ENCODE measurements at regions of chr13 and their contacts with region 1.

Region 1: GRCh38 chr13:21625366-21625765 is 21.4 kb upstream of the MICU2 start:
- DNase-seq: peak; percentile 59
- ATAC-seq: peak; percentile 94
- H3K4me3 ChIP-seq: no peak overlapping the region
- H3K27ac ChIP-seq: no peak overlapping the region
- H3K4me1 ChIP-seq: no peaks in the 10 kb centered on the region
- H3K27me3 ChIP-seq: peaks cover 21% of the 10 kb centered on the region
- CTCF ChIP-seq: peak; percentile 79

Region 2: GRCh38 chr13:21603531-21604448 is 21.6 kb before region 1 on chr13 and contains the start of gene MICU2:
- CTCF ChIA-PET with region 1: no interaction called
- POLR2A ChIA-PET with region 1: interaction called, 11 read pairs
- intact Hi-C with region 1: no loop called
- DNase-seq: peak; percentile 87
- ATAC-seq: peak; percentile 98
- H3K4me3 ChIP-seq: peak within 1 kb of the TSS; percentile 87
- H3K27ac ChIP-seq: peak within 1 kb of the TSS; percentile 74
- H3K4me1 ChIP-seq: peaks cover 5% of the 10 kb centered on the region; the same call in 1 of the 2 replicates
- H3K27me3 ChIP-seq: peaks cover 8% of the 10 kb centered on the region; the same call in 1 of the 2 replicates
- CTCF ChIP-seq: no peak
- total RNA-seq, gene MICU2: 53.3 and 69.9 TPM in 2 replicates

Region 3: DNA sequence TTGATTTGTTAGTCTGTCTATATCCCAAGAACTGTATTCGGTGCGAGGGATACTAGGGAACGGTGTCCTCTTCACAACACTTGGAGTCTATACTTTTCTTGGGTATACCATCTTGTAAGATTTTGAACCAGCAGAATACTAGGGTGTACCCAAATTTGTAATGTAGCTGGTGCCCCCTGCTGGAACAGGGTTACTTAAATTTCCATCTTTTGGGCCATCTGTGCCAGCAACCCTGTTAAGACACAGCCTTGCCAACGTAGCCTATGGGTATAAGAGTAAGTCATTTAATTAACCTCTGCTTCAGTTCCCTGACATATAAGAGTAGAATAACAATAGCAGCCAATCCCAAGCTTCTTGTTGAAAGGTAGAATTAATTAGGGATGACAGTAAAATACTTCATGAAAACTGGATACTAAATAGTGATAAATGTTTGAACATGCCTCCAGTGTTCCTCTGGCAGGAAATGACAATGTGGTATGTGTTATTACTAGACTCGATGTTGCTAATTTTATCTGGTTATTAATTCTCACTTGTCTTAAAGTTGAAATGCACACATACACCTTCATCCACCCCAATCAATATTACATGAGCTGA is 653.1 kb after region 1 on chr13:
- CTCF ChIA-PET with region 1: no interaction called
- POLR2A ChIA-PET with region 1: no interaction called
- intact Hi-C with region 1: loop called (anchors 2 kb)
- DNase-seq: peak; percentile 44
- ATAC-seq: no peak
- H3K4me3 ChIP-seq: no peak overlapping the region
- H3K27ac ChIP-seq: no peak overlapping the region
- H3K4me1 ChIP-seq: no peaks in the 10 kb centered on the region
- H3K27me3 ChIP-seq: 0 out of 2 replicates have a peak, but pooled peaks cover 4% of the 10 kb centered on the region
- CTCF ChIP-seq: peak; percentile 46

Region 4: DNA sequence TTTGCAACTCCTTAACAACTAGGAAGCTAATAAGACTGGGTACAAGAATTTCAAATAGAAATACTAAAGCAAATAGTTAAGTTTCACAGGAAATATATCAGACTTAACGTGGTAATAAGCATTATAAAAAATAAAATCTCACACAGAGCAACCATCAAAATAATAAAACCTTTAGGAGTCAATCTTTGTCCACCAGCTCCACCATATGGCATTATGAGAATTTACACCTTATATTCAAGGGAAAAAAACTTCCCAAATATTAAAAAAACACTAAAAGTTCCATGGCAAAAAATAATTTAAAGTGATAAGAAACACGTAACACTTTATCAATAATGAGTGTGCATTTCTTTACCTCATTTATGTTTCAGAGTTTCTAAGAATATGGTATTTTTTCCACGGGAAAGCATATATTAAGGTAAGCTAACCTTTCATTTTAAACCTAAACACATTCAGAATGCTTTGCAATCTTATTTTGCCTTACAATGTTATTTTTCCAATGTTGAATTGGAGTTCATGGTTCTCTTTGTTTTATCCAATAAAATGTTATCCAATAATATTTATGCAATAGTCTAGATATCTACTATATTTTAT is 1132.3 kb after region 1 on chr13:
- CTCF ChIA-PET with region 1: no interaction called
- POLR2A ChIA-PET with region 1: no interaction called
- intact Hi-C with region 1: loop called (anchors 1 kb)
- DNase-seq: peak; percentile 9
- ATAC-seq: no peak
- H3K4me3 ChIP-seq: no peak overlapping the region
- H3K27ac ChIP-seq: no peak overlapping the region
- H3K4me1 ChIP-seq: no peaks in the 10 kb centered on the region
- H3K27me3 ChIP-seq: 0 out of 2 replicates have a peak, but pooled peaks cover 6% of the 10 kb centered on the region
- CTCF ChIP-seq: peak; percentile 62

Region 5: DNA sequence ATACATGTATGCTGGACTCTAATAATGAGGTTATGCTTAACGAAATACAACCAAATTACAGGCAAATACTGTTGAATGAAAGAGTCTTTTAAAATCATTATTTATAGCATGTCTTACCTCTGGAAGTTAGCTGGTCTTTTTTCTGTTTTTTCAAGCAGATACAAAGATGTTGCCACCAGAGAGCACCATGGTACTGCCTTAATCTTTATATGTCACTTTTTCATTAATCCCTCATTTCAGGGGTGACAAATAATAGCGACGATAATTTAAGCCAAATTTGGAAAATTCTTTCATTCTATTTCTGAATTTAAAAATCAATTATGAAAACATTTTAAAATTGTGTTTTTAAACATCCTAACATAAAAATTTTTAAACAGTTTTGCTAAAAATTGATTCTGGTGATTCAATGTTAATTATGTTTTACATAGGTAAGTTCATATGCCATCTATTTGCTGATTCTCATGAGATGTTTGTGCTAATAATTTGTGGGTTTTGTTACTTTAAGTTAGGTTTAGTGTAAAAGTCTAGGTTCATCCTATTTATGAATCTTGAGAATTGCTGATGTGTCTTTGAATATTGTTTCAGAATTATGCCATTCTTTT is 1176.1 kb after region 1 on chr13:
- CTCF ChIA-PET with region 1: interaction called, 3 read pairs
- POLR2A ChIA-PET with region 1: no interaction called
- intact Hi-C with region 1: loop called (anchors 1 kb)
- DNase-seq: no peak
- ATAC-seq: no peak
- H3K4me3 ChIP-seq: no peak overlapping the region
- H3K27ac ChIP-seq: no peak overlapping the region
- H3K4me1 ChIP-seq: no peaks in the 10 kb centered on the region
- H3K27me3 ChIP-seq: peaks cover 26% of the 10 kb centered on the region; the same call in 1 of the 2 replicates
- CTCF ChIP-seq: peak; percentile 38; the same call in 1 of the 2 replicates

Measured in PC-3 (cell line).